CD4-positive, alpha-beta T cell (primary cell): ENCODE measurements at regions of chr18 and their contacts with region 1.

Region 1: DNA sequence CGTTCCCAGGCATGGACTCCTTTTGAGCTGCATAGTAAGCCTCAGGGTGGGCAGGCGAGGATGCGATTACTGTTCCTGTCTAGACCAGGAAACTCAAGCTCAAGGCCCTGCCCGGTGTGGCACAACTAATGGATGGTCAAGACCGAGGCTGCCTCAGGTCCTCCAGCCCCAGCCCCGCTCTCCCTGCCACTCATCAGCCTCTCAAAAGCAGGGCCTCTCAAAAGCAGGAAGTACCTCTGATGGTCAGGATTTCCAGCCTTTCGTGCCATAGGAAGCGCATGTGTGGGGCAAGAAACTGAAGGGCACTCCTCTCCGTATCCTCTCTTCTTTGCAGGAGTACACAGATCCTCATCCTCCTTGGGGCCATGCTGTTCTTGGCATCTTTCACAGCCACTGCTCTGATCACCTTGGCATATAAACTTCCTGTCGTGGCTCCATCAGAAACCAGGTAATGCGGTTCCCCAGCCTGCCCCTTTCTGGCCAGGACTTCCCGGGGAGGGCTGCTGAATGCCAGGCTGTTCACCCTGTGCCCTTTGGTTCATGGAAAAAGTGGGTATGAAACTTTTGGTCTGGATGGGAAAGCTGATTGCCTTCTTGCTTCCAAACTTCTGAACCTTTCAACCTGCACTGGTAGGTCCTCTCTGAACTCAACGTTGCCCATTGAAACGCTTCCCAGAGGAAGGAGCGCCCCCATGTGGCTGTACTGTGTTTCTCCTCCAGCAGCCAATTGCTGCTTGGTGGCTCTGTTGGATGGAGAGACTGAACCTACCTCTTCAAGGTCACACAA is 82.8 kb upstream of the SEC11C start:
- DNase-seq: peak in 12 of 14 experiments; percentile 8 to 67 (median 33)
- ATAC-seq: no peak
- H3K4me3 ChIP-seq: no peak overlapping the region
- H3K4me3 Mint-ChIP-seq: no peak overlapping the region
- H3K27ac ChIP-seq: no peak overlapping the region
- H3K27ac Mint-ChIP-seq: no peak overlapping the region
- H3K4me1 ChIP-seq: no peaks in the 10 kb centered on the region
- H3K4me1 Mint-ChIP-seq: no peaks in the 10 kb centered on the region
- H3K27me3 ChIP-seq: peaks cover 3 to 4% of the 10 kb centered on the region in 2 experiments
- H3K27me3 Mint-ChIP-seq: peaks cover 34% of the 10 kb centered on the region
- CTCF ChIP-seq: peak; percentile 45

Region 2: DNA sequence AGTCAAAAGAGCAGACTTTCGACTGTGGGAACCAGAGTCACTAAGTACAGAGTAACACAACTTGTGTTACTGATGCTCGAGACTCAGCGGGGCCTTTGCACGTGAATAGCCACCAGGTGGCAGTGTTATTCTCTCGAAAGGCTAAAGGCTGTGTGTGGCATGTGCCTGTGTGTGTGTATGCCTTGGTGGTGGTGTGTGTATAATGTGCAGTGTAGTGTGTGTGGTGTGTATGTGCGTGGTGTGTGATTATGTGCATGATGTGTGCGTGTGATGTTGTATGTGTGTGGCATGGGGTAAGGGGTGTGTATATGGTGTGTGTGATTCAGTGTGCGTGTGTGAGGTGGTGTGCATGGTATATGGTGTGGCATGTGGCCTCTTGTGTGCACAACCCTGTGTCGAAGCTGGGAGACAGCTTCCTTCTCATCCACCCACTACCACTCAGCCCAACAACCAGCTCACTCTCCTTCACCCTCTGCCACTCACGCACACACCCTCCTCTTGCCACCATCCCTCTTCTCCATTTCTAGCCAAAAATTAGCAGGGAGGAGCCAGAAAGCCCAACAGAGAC is 275.2 kb before region 1 on chr18:
- CTCF ChIA-PET with region 1: no interaction called
- POLR2A ChIA-PET with region 1: no interaction called
- intact Hi-C with region 1: loop called (anchors 1 kb)
- DNase-seq: peak; percentile 45 to 81 (median 56)
- ATAC-seq: peak; percentile 78
- H3K4me3 ChIP-seq: no peak overlapping the region
- H3K4me3 Mint-ChIP-seq: no peak overlapping the region
- H3K27ac ChIP-seq: no peak overlapping the region
- H3K27ac Mint-ChIP-seq: no peak overlapping the region
- H3K4me1 ChIP-seq: no peaks in the 10 kb centered on the region
- H3K4me1 Mint-ChIP-seq: no peaks in the 10 kb centered on the region
- H3K27me3 ChIP-seq: peaks cover 9 to 12% of the 10 kb centered on the region in 2 experiments
- H3K27me3 Mint-ChIP-seq: peaks cover 45% of the 10 kb centered on the region
- CTCF ChIP-seq: peak; percentile 90